ENCODE measurements at regions of chr6 and their contacts with region 1.

Region 1: DNA sequence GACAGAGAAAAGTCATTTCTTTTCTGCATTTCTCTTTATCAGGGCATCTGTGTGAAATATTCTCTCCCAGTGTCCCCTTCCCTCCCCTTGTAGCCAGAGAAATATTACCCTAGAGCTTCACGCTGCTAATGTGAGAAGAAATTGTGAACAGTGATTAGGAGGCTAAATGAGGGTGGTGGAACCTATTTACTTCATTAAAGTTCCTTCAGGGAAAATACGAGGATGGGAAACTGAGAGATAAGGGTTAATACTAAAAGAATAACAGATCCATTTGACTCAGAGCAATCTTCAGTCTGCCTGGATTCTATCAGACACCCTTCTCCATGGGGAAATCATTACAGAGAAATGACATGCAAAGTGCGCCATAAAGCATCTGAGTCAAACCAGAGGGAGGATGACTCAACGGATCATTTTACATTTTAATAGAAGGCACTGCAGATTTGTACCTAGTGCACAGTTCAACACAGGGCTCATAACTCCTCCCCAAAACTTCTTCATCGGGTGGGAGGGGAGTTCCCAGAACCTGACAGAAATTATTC is 131.3 kb downstream of the GJA10 start:
- DNase-seq: peak; percentile 72
- H3K4me3 Mint-ChIP-seq: peak overlapping the region; percentile 56
- H3K27ac Mint-ChIP-seq: peak overlapping the region; percentile 90
- H3K4me1 Mint-ChIP-seq: peaks cover 66% of the 10 kb centered on the region
- H3K27me3 Mint-ChIP-seq: no peaks in the 10 kb centered on the region

Region 2: GRCh38 chr6:89985751-89986493 is 39.7 kb before region 1 on chr6:
- intact Hi-C with region 1: loop called (anchors 2 kb)
- DNase-seq: no peak
- H3K4me3 Mint-ChIP-seq: peak overlapping the region; percentile 23
- H3K27ac Mint-ChIP-seq: peak overlapping the region; percentile 83
- H3K4me1 Mint-ChIP-seq: peaks cover 59% of the 10 kb centered on the region
- H3K27me3 Mint-ChIP-seq: no peaks in the 10 kb centered on the region

Region 3: DNA sequence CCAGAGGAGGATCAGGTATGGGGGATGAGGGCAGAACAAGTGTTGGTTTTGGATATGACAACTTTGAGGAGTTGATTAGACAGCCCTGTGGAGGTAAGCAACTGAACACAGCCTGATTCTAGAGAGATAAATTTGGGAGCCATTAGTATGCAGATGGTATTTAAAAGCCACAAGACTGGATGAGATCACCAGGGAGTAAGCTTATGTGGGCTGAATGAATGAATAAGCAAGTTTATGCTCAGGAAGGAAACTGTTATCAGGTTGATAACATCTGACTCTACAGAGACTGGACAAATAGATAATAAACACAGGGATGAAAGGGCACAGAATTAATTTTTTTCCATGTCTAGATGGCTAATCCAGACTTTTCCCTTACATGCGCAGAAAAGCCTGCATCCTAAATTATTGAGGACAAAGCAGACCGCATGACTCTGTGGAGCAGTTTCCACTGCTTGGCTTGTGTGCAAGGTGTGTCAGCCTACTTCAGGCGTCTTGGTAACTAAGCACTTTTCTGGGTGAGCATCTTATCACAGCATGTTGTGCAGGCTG is 19.3 kb after region 1 on chr6:
- intact Hi-C with region 1: loop called (anchors 1 kb)
- DNase-seq: peak; percentile 53
- H3K4me3 Mint-ChIP-seq: no peak overlapping the region
- H3K27ac Mint-ChIP-seq: no peak overlapping the region
- H3K4me1 Mint-ChIP-seq: peaks cover 26% of the 10 kb centered on the region
- H3K27me3 Mint-ChIP-seq: no peaks in the 10 kb centered on the region

Region 4: DNA sequence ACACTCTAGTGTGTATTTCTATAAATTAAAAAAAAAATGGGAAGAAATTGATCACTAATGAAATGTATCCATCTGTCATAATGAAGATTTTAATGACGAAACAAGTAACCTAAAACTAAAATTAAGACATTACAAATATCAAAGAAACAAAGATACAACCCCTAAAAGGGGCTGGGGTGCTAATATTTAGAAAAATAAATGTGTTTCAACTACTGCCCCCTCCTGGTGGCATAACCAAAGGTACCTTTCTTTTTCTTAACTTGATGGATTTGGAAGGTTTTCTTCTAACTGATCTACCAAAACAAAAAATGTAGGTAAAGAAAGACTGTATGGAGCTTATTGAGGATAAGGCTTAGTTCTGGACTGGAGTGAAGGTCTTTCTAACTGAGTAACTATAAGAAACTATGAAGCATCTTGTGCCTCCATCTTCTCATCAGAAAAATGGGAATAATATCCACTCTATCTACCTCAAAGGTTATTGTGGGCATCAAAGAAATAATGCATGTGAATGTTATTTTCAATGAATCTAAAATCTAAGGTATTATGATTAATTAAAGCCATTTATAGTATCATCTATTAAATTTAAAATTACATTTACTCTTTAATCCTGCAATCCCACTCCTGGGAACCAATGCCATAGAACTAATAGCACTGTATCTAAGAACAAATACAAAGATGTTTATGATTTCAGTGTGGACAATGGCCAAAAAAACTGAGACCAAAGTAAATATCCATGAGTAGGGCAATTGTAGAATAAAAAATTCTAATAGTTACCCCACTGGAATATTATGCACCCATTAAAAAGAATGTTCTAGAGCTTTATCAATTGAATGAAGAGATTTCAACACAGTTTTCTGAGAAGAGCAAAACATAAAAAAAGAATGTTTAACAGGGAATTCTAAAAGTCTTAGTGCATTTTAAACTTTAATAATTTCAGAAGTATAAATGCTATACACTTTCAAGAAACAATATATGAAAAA is 153.9 kb after region 1 on chr6:
- intact Hi-C with region 1: loop called (anchors 5 kb)
- DNase-seq: peak; percentile 75
- H3K4me3 Mint-ChIP-seq: peak overlapping the region; percentile 11
- H3K27ac Mint-ChIP-seq: no peak overlapping the region
- H3K4me1 Mint-ChIP-seq: peaks cover 68% of the 10 kb centered on the region
- H3K27me3 Mint-ChIP-seq: no peaks in the 10 kb centered on the region

Region 5: GRCh38 chr6:90478789-90479602 is 453.4 kb after region 1 on chr6:
- intact Hi-C with region 1: loop called (anchors 5 kb)
- DNase-seq: peak; percentile 95
- H3K4me3 Mint-ChIP-seq: peak overlapping the region; percentile 48
- H3K27ac Mint-ChIP-seq: peak overlapping the region; percentile 71
- H3K4me1 Mint-ChIP-seq: peaks cover 51% of the 10 kb centered on the region
- H3K27me3 Mint-ChIP-seq: no peaks in the 10 kb centered on the region

Measured in activated CD4-positive, alpha-beta T cell treated with anti-CD3 and anti-CD28 coated beads, Interleukin-2, amount 10 ng/mL, durations not matched to agents 24 days and 14 days (primary cell).